ENCODE measurements at regions of chr9 and their contacts with region 1.

Region 1: GRCh38 chr9:115591584-115591984 is 473.6 kb upstream of the TNC start:
- DNase-seq: peak; percentile 95
- H3K4me3 ChIP-seq: no peak overlapping the region
- H3K27ac ChIP-seq: peak overlapping the region; percentile 37
- H3K4me1 ChIP-seq: peaks cover 36% of the 10 kb centered on the region
- H3K27me3 ChIP-seq: no peaks in the 10 kb centered on the region
- CTCF ChIP-seq: peak; percentile 93 to 94

Region 2: DNA sequence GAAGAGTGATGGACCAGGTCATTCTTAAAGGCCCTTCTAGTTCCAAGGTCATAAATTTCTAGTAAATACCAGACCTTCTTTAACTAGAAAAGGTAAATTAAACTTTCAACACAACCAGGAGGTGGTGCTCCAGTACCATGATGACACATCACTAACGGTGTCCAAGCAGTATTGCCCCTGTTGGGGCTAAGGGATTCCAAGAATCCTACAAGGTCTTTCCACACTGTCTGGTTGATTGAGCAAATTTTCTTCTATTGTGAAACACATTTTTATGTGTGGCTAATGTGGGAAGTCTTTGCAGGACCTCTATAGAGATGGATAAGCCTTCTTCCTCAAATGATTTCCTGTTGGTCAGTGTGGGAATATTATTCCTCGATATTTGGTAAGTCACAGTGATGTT is 102.4 kb after region 1 on chr9:
- CTCF ChIA-PET with region 1: interaction called, 4 read pairs
- dilution Hi-C with region 1: no loop called
- in situ Hi-C with region 1: no loop called
- intact Hi-C with region 1: loop called (anchors 1 kb)
- DNase-seq: peak; percentile 65
- H3K4me3 ChIP-seq: no peak overlapping the region
- H3K27ac ChIP-seq: no peak overlapping the region
- H3K4me1 ChIP-seq: peaks cover 20% of the 10 kb centered on the region
- H3K27me3 ChIP-seq: no peaks in the 10 kb centered on the region
- CTCF ChIP-seq: peak; percentile 41 to 60

Region 3: DNA sequence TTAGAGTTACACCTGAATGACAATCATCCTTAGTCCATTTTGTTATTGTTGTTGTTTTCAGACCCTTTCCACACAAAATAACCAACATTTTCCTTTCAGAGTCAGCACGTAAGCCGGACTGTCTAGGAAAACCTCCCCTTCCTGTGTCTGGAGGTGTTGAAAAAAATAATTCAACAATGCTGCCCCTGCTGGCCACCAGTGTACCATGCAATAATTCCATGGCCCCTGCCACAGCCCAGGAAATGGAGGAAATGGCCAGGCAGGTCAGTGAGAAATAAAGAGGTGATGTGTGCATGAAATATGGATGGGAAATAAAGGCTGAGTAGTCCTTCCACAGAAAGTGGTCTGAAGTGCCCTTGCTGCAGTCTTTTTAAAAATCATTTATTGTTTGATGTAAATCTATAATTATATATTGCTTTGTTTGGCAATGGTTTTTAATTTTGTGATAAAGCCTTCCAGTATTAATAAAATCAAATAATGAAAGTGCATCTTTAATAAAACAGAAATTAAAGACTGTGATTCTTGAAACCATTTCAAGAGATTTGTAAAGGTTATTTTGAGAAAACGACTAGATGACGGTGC is 409.3 kb after region 1 on chr9:
- CTCF ChIA-PET with region 1: no interaction called
- dilution Hi-C with region 1: no loop called
- in situ Hi-C with region 1: no loop called
- intact Hi-C with region 1: loop called (anchors 1 kb)
- DNase-seq: no peak
- H3K4me3 ChIP-seq: no peak overlapping the region
- H3K27ac ChIP-seq: no peak overlapping the region
- H3K4me1 ChIP-seq: peaks cover 34% of the 10 kb centered on the region
- H3K27me3 ChIP-seq: no peaks in the 10 kb centered on the region
- CTCF ChIP-seq: peak; percentile 48 to 61

Region 4: DNA sequence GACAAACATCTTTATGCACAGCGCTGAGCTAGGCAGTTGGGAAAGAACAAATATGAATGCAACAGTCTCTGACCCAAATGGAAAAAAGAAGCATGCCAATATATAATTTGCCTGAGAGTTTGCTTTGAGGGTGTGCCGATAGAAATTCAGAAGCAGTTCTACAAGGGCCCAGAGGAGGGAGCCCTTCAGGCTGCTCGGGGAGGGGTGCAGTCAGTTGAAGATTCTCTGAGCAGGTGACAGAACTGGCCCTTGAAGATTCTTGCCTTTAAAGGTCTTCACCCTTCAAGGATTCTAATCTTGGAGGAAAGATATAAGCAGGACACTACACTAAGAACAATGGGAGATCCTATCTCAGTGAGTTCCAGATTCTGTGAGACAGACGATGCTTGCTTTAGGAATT is 558.3 kb after region 1 on chr9:
- CTCF ChIA-PET with region 1: interaction called, 7 read pairs
- dilution Hi-C with region 1: no loop called
- in situ Hi-C with region 1: loop called in 1 of 2 experiments (anchors 25 kb)
- intact Hi-C with region 1: loop called (anchors 1 kb)
- DNase-seq: no peak
- H3K4me3 ChIP-seq: no peak overlapping the region
- H3K27ac ChIP-seq: no peak overlapping the region
- H3K4me1 ChIP-seq: peaks cover 18% of the 10 kb centered on the region
- H3K27me3 ChIP-seq: peaks cover 6% of the 10 kb centered on the region
- CTCF ChIP-seq: peak; percentile 69 to 79

Region 5: DNA sequence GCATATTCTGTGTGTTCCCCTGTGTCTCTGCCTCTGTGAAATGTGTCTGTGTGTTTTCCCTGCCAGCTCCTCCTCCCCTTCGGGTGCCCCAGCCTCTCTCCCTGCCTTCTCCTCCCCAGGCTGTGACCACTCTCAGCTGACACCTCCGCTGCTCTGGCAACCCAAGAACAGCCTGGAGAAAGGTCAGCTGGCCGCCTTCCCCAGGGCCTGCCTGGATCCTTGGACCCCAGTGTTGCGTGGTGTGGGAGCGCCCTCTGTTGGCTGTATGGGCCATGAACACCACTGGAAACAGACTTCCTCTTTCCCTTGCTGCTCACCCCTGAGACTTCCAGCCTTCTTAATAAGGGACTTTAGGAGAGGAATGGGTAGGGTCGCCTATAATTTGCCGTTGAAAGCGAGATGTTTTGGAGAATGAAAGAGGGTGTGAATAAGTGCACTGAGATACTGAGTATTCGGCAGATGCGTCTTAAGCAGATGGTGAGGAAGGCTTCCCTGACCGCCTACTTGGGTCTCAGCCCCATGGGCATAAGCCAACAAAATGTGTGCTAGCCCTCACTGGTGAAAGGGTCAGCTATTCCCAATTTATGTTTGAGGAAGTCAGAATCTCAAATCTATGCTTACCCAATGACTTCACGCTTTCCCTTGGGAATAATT is 980.6 kb after region 1 on chr9:
- CTCF ChIA-PET with region 1: no interaction called
- dilution Hi-C with region 1: no loop called
- in situ Hi-C with region 1: loop called (anchors 5 to 10 kb)
- intact Hi-C with region 1: loop called (anchors 1 kb)
- DNase-seq: peak; percentile 48
- H3K4me3 ChIP-seq: no peak overlapping the region
- H3K27ac ChIP-seq: no peak overlapping the region
- H3K4me1 ChIP-seq: no peaks in the 10 kb centered on the region
- H3K27me3 ChIP-seq: no peaks in the 10 kb centered on the region
- CTCF ChIP-seq: peak; percentile 90 to 96

Region 6: DNA sequence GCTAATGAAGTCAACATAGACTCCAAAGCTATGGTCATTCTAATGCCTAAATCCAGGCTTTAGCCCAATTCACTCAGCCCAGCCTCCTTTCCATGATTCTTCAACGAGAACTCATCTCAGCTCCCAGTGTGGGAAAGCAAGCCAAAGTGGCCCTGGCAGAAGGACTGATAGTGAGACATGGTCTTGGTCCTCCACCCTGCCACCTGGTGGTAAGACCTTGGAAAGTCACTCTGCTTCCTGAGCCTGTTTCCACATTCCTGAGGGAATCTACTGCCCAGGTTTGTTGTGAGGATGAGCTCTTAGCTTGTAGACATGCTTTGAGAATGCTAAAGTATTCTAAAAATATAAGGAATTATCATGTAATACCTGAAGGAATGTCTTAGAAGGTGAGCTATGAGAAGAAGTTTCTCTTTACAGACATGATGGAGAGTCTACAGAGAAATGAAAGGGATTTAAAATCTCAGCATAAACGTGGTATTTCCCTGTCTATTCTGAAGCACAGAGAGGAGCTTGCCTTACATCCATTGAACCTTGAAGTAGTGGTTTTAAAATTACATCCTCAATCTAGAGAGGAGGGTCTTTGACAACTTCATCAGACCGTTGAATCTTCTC is 1269.0 kb after region 1 on chr9:
- CTCF ChIA-PET with region 1: no interaction called
- dilution Hi-C with region 1: no loop called
- in situ Hi-C with region 1: no loop called
- intact Hi-C with region 1: loop called (anchors 2 kb)
- DNase-seq: peak; percentile 66
- H3K4me3 ChIP-seq: no peak overlapping the region
- H3K27ac ChIP-seq: no peak overlapping the region
- H3K4me1 ChIP-seq: peaks cover 27% of the 10 kb centered on the region
- H3K27me3 ChIP-seq: no peaks in the 10 kb centered on the region
- CTCF ChIP-seq: peak; percentile 84 to 87

Measured in mammary epithelial cell (primary cell).